CD8-positive, alpha-beta T cell (primary cell): ENCODE measurements at regions of chr17 and their contacts with region 1.

Region 1: GRCh38 chr17:35930211-35931065 is at the start of gene RDM1:
- DNase-seq: peak; percentile 61 to 89 (median 75)
- ATAC-seq: peak; percentile 96
- H3K4me3 ChIP-seq: peak within 1 kb of the TSS; percentile 60 to 64
- H3K4me3 Mint-ChIP-seq: peak within 1 kb of the TSS; percentile 83
- H3K27ac ChIP-seq: no peak within 1 kb of the TSS
- H3K27ac Mint-ChIP-seq: peak within 1 kb of the TSS; percentile 57
- H3K4me1 ChIP-seq: peaks cover 9% of the 10 kb centered on the region
- H3K4me1 Mint-ChIP-seq: peaks cover 18% of the 10 kb centered on the region
- H3K27me3 ChIP-seq: no peaks in the 10 kb centered on the region
- H3K27me3 Mint-ChIP-seq: no peaks in the 10 kb centered on the region
- CTCF ChIP-seq: no peak
- total RNA-seq, gene RDM1: 0.27 TPM in 1 of 2 experiments, not detected in the other

Region 2: DNA sequence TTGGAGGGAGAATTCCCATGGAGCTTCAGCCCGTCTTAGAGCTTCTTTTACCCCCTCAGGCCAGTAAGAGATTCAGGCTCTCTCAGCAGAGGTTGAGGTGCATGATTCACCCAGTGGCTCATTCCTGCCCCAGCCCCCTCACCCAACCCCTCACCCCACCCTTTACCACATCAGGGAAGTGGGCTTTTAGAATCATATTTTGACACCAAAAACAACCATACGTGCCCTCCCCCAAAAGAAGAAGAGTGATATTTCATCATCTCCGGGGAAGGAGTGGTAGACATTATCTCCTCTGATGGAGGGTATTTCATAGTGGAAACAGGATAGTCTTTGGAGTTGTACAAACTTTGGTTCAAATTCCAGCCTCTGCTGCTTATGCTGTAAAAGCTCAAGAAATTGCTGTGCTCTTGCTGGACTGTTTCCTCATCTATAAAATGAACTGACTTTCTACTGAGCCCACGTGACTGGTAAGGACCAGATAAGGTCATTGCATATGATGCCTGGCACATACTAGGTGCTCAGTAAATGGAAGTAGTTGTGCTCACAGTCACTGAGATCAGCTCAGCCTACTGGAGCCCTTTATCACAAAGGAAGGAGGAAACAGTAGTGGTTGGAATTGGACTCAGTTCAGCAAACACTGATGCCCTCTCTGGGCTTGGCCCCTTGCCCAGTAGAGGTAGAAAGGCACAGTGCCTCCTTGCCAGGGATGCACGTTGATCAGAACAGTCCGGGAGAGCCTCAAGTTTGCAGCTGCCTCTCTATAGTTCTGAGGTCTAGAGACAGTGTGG is 32.0 kb before region 1 on chr17:
- CTCF ChIA-PET with region 1: no interaction called
- POLR2A ChIA-PET with region 1: no interaction called
- intact Hi-C with region 1: loop called in 1 of 2 experiments (anchors 5 kb)
- DNase-seq: peak in 5 of 9 experiments; percentile 46 to 75 (median 68)
- ATAC-seq: peak; percentile 51
- H3K4me3 ChIP-seq: peak overlapping the region in 1 of 2 experiments; percentile 12
- H3K4me3 Mint-ChIP-seq: peak overlapping the region; percentile 27
- H3K27ac ChIP-seq: peak overlapping the region; percentile 5 to 81
- H3K27ac Mint-ChIP-seq: peak overlapping the region; percentile 91
- H3K4me1 ChIP-seq: peaks cover 49% of the 10 kb centered on the region
- H3K4me1 Mint-ChIP-seq: peaks cover 65% of the 10 kb centered on the region
- H3K27me3 ChIP-seq: no peaks in the 10 kb centered on the region
- H3K27me3 Mint-ChIP-seq: no peaks in the 10 kb centered on the region
- CTCF ChIP-seq: no peak